ENCODE measurements at regions of chr2 and their contacts with region 1.

Region 1: DNA sequence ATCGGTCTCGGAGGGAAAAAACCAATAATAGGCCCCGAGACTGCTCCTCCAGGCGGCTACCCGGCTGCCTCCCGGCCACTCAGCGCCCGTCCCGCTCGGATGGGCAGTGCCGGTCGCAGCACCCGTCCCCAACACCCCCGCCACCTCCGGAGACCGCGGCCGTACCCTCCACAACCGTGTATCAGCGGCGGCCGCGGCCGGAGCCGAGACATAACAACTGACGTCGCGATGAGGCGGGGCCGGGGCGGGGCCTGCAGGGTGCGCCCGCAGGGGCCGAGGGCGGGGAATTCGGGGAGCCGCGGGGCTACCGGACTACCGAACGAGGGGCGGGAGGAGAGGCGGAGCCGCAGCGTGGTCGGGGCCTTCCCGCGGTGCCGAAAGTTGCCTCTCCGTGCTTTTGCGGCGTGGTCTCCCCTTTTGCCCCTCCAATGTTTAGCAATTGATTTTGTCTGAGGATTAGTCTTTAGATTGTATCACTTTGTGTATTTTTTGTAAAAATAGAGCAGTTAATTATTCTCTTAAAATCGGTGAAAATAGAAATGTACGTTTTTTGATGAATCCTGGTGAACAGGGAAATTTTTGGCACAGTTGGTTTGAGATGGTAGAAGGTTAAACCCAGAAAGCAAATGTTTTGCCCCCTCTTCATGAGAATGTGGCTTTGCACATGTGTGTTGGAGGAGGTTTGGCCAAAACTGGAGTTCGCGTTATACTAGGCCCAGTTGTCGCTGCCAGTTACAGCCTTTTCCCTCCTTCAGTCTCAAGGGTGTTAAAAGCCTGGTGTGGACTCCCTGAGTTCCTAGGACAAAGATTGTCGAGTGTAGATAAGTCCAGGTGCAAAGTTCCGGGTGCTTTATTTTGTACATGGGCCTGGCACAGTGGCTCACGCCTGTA is at the start of gene RNF103:
- DNase-seq: peak; percentile 78 to 94
- H3K4me3 ChIP-seq: peak within 1 kb of the TSS; percentile 78
- H3K27ac ChIP-seq: peak within 1 kb of the TSS; percentile 89
- H3K4me1 ChIP-seq: peaks cover 16% of the 10 kb centered on the region
- H3K27me3 ChIP-seq: no peaks in the 10 kb centered on the region
- CTCF ChIP-seq: no peak
- total RNA-seq, gene RNF103: 24.5 and 25.4 TPM in 2 replicates

Region 2: DNA sequence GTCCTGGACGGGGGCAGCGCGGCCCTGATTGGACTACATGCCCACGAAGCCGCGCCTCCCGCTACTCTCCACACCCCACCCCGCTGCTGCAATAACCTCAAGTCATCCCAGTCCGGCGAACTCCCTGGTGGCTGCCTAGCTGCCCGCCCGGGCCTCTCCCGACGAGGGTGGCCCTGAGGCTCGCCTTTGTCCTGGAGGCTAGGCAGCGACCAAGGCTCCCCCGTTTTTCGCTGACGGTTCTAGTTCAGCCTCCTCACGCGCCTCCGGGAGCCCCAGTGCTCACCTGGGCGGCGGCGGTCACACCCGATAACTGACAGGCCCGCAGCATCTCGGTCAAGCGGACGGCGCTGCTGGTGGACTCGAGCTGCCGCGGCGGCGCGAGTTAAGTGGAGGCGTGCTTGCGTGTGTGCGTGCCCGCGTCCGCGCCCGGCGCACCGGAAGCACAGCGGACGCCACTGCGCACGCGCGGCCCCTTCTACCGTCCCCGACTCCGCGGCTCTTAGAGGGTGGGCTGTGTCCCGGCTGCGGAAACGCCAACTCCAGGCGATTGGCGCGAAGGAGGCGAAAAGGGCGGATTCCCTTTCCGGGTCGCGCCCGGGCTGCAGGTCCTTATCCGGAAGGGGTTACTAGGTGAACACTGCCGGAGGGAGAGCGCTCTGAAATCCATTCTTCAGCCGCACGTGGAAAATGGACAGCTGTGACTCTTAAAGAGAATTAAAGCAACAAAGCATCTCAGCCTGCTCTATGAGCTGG is 428.7 kb before region 1 on chr2 and contains the start of gene IMMT:
- CTCF ChIA-PET with region 1: no interaction called
- POLR2A ChIA-PET with region 1: no interaction called
- intact Hi-C with region 1: loop called (anchors 5 kb)
- DNase-seq: peak; percentile 89 to 96
- H3K4me3 ChIP-seq: peak within 1 kb of the TSS; percentile 93
- H3K27ac ChIP-seq: peak within 1 kb of the TSS; percentile 97
- H3K4me1 ChIP-seq: peaks cover 38% of the 10 kb centered on the region
- H3K27me3 ChIP-seq: no peaks in the 10 kb centered on the region
- CTCF ChIP-seq: no peak
- total RNA-seq, gene IMMT: 108 and 114 TPM in 2 replicates

Region 3: GRCh38 chr2:86562922-86563649 is 60.8 kb before region 1 on chr2 and contains the start of gene CHMP3:
- CTCF ChIA-PET with region 1: no interaction called
- POLR2A ChIA-PET with region 1: interaction called, 5 read pairs
- intact Hi-C with region 1: loop called (anchors 1 kb)
- DNase-seq: peak; percentile 84 to 94
- H3K4me3 ChIP-seq: peak within 1 kb of the TSS; percentile 74
- H3K27ac ChIP-seq: peak within 1 kb of the TSS; percentile 94
- H3K4me1 ChIP-seq: peaks cover 14% of the 10 kb centered on the region
- H3K27me3 ChIP-seq: no peaks in the 10 kb centered on the region
- CTCF ChIP-seq: no peak
- total RNA-seq, gene CHMP3: 108 and 120 TPM in 2 replicates

Region 4: DNA sequence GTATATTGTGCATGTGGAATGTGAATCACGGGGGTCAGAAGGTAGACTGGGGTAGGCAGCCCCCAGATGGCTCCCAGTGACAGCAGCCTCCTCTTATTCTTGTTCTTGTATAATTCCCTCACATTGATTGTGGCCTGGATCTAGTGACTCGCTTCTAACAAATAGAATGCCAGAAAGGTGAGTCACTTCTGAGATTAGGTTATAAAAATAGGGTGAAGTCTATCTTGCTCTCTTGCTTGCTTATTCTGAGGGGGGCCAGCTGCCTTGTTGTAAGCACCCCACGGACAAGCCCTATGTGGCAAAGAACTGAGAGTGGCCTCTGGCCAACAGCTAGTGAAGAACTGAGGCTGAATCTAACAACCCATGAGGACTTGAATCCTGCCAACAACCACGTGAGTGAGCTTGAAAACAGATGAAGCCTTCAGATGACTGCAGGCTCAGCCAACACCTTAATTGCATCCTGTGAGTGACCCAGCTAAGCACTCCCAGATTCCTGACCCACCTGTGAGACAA is 80.6 kb after region 1 on chr2:
- CTCF ChIA-PET with region 1: interaction called, 4 read pairs
- POLR2A ChIA-PET with region 1: no interaction called
- intact Hi-C with region 1: loop called (anchors 5 kb)
- DNase-seq: peak; percentile 60 to 88
- H3K4me3 ChIP-seq: peak overlapping the region; percentile 47; the same call in 1 of the 2 replicates
- H3K27ac ChIP-seq: peak overlapping the region; percentile 86
- H3K4me1 ChIP-seq: peaks cover 34% of the 10 kb centered on the region
- H3K27me3 ChIP-seq: no peaks in the 10 kb centered on the region
- CTCF ChIP-seq: no peak

Measured in PC-9 (cell line).